Activated CD4-positive, alpha-beta T cell treated with anti-CD3 and anti-CD28 coated beads, Interleukin-2, amount 10 ng/mL, durations not matched to agents 24 days and 14 days (primary cell): ENCODE measurements at regions of chr14 and their contacts with region 1.

Region 1: GRCh38 chr14:22163051-22163450 is 426.0 kb downstream of the DAD1 start:
- DNase-seq: peak; percentile 52
- H3K4me3 Mint-ChIP-seq: peak overlapping the region; percentile 82
- H3K27ac Mint-ChIP-seq: peak overlapping the region; percentile 85
- H3K4me1 Mint-ChIP-seq: peaks cover 16% of the 10 kb centered on the region
- H3K27me3 Mint-ChIP-seq: no peaks in the 10 kb centered on the region

Region 2: GRCh38 chr14:22200977-22201605 is 38.0 kb after region 1 on chr14:
- intact Hi-C with region 1: loop called (anchors 5 kb)
- DNase-seq: peak; percentile 59
- H3K4me3 Mint-ChIP-seq: peak overlapping the region; percentile 28
- H3K27ac Mint-ChIP-seq: peak overlapping the region; percentile 48
- H3K4me1 Mint-ChIP-seq: peaks cover 9% of the 10 kb centered on the region
- H3K27me3 Mint-ChIP-seq: no peaks in the 10 kb centered on the region